Panc1 (cell line): ENCODE measurements at regions of chr2 and their contacts with region 1.

Region 1: DNA sequence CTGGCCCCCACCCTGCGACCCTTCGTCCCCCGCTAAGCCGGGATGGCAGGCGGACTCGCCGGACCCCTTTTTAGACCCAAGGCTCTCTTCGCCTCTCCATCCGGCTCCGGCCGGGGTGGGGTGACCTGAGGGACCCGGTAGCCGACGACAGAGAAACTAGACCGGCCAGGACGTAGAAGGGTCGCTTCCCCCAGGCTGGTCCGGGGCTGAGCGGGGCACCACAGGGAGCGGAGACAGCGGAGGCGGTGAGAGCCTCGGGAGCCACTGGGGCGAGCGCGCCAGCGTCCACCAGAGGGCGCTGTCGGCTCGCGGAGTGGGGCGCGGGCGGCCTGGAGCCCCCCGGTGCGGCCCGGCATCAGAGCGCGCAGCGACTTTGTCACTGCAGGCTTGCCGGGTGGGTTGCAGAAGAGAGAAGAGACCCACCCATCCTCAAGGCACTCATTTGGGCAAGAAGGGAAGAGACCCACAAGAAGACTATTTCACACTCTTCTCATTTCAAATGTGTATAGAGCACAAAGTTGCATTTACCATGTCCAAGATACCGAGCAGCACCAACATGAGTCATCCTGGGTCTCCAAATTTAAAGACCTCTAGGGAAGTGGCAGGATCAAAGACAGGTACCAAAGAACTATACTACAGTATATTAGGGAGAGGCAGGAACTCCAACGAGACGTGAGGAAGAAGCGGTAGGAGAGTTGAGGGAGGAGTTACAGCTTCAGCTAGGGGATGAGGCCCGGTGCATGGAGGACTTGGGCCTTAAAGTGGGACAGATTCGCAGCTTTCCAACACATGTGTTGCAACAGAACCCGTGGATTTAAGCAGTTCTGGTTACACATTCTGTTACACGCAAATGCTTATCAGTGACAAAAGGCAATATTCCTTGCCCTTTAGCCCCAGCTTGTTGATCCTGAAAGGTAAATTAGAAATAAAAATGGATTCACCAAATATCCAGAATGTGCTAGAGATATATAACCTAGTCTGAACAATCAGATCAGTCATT is 7.6 kb upstream of the PRKCE start:
- DNase-seq: no peak
- ATAC-seq: peak; percentile 99
- H3K4me3 ChIP-seq: peak overlapping the region; percentile 64 to 76
- H3K27ac ChIP-seq: peak overlapping the region; percentile 75
- H3K4me1 ChIP-seq: no peaks in the 10 kb centered on the region
- H3K27me3 ChIP-seq: peaks cover 6% of the 10 kb centered on the region; the same call in 1 of the 2 replicates
- CTCF ChIP-seq: peak; percentile 97

Region 2: DNA sequence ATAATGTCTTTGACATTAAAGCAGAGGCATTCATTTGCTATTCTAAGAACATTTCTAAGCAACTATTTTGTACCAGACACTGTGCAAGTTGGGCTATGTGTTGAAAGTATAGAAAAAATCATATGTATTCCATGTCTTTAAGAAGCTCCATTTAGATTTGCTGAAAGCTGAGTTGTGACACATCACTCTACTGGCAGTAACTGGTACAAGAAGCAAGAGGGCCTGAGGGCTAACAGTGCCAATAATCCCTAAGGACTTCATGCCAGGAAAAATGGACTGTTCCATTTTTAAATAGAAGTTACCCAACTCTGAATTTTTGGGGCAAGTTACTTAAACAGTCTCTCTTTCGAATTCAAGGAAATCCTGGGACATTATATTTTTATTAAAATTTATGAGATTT is 211.4 kb before region 1 on chr2:
- CTCF ChIA-PET with region 1: no interaction called
- POLR2A ChIA-PET with region 1: no interaction called
- in situ Hi-C with region 1: no loop called
- intact Hi-C with region 1: no loop called
- DNase-seq: no peak
- ATAC-seq: no peak
- H3K4me3 ChIP-seq: no peak overlapping the region
- H3K27ac ChIP-seq: no peak overlapping the region
- H3K4me1 ChIP-seq: no peaks in the 10 kb centered on the region
- H3K27me3 ChIP-seq: no peaks in the 10 kb centered on the region
- CTCF ChIP-seq: no peak

Region 3: DNA sequence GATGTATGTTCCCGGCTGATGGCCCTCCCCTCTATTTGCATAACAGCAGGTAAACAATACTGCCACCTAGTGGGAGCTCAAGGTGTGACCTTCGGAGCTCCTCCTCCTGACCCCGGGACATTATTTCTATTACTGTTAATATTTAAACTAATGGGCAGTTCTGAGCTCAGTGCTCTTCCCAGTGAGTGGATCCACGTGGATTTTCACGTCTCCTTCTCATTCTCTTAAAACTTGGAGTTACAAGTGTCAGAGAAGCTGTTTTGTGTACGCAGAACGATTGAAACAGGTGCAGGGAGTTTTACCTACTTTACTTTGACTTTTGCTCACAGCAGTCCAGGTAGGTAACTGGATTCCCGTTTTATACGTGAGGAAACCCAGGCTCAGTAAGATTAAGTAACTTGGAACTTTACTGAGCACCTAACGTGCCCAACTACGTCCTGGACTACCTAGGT is 134.9 kb after region 1 on chr2:
- CTCF ChIA-PET with region 1: interaction called, 6 read pairs
- POLR2A ChIA-PET with region 1: no interaction called
- in situ Hi-C with region 1: no loop called
- intact Hi-C with region 1: loop called (anchors 5 kb)
- DNase-seq: peak; percentile 20
- ATAC-seq: peak; percentile 84; the same call in 1 of the 2 replicates
- H3K4me3 ChIP-seq: no peak overlapping the region
- H3K27ac ChIP-seq: no peak overlapping the region
- H3K4me1 ChIP-seq: no peaks in the 10 kb centered on the region
- H3K27me3 ChIP-seq: no peaks in the 10 kb centered on the region
- CTCF ChIP-seq: peak; percentile 88

Region 4: DNA sequence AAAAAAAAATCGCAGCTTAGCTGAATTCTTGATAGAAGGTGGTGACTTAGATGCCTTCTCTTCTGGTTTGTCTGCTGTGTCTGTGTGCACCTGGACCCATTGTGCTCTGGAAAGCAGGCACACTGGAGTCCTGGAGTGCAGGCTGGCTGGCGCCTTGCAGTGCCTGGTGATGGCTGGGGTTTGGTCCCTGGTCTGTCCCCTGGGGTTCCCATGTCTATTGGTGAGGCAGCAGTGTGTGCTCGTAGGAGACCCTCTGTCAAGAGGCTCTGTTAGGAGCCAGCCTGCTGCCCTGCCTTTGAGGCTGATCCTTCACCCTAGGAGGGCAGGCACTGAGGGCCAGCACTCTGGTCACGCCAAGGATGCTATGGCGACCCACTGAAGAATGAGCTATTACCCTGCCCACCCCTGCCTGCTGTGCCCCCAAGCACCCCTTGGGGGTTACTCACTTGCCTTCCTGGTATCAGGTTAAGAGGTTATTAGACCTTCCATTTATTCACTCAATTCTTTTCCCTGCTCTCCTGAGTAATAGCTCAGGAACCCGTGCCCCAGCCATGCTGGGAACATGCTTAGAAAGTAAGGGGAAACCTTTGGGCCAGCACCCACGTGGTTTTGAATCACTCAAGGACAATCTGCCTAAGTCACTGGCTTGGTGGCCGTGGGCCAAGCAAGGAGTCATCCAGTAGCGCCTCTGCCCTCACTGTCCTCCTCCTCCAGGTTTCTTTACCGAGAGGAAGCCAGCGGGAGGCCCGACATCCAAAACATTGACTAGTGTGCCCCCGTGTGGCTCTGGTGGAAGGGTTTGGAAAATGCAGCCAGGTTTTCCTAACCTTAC is 292.2 kb after region 1 on chr2:
- CTCF ChIA-PET with region 1: interaction called, 5 read pairs
- POLR2A ChIA-PET with region 1: no interaction called
- in situ Hi-C with region 1: no loop called
- intact Hi-C with region 1: loop called (anchors 1 kb)
- DNase-seq: peak; percentile 94
- ATAC-seq: peak; percentile 78
- H3K4me3 ChIP-seq: peak overlapping the region in 1 of 2 experiments; percentile 31; a peak in 2 of 4 replicates
- H3K27ac ChIP-seq: 0 out of 2 replicates have a peak overlapping the region, but pooled peaks have one; percentile 17
- H3K4me1 ChIP-seq: peaks cover 37% of the 10 kb centered on the region
- H3K27me3 ChIP-seq: no peaks in the 10 kb centered on the region
- CTCF ChIP-seq: peak; percentile 83

Region 5: DNA sequence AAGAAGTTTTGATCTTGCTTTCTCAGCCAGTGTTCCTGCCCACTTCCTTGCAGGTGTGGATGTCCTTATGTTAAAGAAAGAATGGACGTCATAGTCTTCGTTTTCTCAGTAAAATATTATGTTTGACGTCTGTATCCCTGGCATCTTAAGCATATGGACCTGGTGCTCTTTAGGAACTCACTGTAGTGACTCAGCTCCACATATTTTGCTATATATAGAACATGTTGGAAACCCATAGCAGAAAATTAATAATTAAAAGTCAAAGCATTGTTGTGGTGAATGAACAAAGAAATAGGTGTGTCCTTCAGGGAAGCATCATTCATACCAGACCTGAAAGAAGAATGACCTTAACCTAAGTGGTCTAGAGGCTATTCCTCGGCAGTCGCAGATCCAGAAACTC is 1075.6 kb after region 1 on chr2:
- CTCF ChIA-PET with region 1: no interaction called
- POLR2A ChIA-PET with region 1: no interaction called
- in situ Hi-C with region 1: no loop called
- intact Hi-C with region 1: no loop called
- DNase-seq: no peak
- ATAC-seq: no peak
- H3K4me3 ChIP-seq: no peak overlapping the region
- H3K27ac ChIP-seq: no peak overlapping the region
- H3K4me1 ChIP-seq: peaks cover 12% of the 10 kb centered on the region
- H3K27me3 ChIP-seq: no peaks in the 10 kb centered on the region
- CTCF ChIP-seq: no peak